ENCODE measurements at regions of chr1 and their contacts with region 1.

Region 1: GRCh38 chr1:226547754-226548191 is 791 bp upstream of the STUM start:
- DNase-seq: peak; percentile 56 to 95 (median 78)

Region 2: DNA sequence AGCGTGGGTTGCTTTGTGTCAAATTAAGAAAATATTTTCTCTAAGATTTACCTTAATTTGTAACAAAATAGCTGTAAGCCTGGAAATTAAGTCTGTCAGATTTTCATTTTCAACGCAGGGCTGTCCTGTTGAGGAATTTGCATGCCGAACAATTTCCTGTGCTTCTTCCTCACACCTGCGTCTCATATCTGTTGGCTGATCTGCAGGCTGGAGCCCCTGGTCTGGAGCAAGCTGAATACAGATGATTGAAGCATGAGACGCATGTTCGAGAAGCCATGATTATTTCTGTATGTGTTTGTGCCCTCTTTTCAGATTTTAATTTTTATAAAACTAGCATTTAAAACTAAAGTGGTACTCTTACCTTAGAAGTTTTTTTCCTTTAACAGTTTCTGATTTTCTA is 314.5 kb before region 1 on chr1:
- intact Hi-C with region 1: no loop called
- DNase-seq: no peak

Region 3: DNA sequence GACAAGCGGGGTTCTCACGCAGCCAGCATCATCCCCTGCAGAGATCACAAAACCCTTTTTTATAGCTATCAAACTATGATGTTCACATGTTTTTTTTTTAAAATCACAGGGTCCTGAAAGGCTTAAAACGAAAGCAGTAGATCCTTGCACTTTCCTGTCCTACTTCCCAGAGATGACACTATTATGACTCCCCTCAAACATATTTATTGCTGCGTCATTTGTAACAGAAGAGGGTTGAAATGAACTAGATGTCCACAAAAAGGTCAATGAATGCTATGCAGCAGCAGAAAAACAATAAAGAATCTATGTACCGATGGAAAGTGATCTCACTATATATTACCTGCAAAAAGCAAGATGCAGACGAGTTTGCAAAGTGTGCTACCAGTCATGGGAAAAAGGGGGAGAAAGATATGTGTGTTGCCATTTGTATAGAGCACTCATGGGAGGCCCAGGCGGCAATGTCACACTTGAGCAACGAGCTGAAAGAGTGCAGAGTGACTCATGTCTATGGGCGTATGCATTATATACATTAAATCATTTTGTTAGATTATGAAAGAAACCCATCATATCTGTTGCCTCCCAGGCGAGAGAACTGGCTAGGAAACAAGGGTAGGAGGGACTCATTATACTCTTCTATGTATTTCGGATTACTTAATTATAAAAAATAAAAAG is 71.0 kb before region 1 on chr1:
- intact Hi-C with region 1: no loop called
- DNase-seq: peak in 1 of 10 donors; percentile 51

Region 4: DNA sequence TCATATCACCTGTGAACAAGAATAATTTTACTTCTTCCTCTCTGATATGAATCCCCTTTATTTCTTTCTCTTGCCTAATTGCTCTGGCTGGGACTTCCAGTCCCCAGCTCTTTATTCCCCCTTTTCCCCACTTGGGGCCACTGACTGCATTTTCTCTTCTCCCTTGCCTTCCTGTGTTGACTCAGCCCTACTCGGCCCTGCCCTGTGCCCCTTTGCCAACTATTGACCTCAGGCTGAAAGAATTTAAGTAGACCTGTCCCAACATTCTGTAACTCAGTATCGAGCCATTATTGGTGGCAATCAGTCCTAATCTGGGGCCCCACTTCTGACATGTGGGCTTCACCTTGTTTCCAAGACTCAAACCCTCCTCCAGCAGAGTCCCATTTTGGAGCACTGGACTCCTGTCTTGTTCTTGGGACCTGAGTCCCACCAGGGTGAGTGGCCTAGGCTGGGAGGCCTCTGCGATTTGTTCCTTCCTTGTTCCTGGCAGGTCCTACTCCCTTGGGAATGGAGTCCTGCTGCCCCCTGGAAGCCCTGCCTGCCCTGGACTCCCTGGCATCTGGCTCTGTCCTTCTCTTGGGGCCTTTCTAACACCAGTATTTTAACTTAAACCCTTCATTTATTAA is 59.7 kb before region 1 on chr1:
- intact Hi-C with region 1: no loop called
- DNase-seq: no peak

Region 5: GRCh38 chr1:226608699-226609505 is 61.1 kb after region 1 on chr1:
- intact Hi-C with region 1: loop called (anchors 5 kb)
- DNase-seq: peak in 8 of 10 donors; percentile 69 to 94 (median 76)

Region 6: GRCh38 chr1:226679853-226680516 is 132.2 kb after region 1 on chr1:
- intact Hi-C with region 1: no loop called
- DNase-seq: peak in 7 of 10 donors; percentile 67 to 96 (median 76)

Measured in posterior cingulate gyrus (tissue), 11 donors.